Colonic mucosa (tissue), 4 donors: ENCODE measurements at regions of chr10 and their contacts with region 1.

Region 1: DNA sequence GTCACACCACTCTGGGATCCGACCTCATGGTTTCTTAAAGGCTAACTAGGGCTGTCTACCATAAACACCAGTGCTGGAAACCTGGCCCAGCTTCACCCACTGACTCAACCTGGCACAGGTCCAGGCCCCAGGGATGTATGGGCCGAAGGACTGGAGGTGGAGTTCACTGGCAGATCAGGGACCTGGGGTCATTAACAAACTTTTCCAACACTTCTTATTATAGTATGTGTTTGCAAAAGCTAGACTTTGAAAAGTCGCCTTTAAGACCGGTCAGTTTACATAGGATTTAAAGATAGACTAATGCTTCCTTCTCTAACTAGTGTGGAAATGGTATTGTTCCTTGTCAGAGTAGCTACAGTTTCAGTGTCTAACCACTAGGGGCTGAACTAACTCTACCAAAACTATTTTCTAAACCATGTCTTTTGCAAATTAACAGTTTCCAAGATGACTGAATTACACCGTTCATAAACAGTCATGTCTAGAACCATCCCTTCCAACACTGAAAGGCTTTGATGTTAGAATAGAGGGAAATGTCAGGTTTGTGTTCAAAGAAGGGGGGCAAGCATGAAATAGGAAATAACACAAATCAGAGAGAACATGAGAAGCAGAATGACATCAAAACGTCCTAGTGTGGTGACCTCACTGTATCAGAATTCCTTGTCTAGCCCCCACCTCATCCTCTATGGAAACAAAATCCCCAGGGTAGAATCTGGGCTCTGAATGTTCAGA is 29.7 kb downstream of the STN1 start:
- DNase-seq: peak; percentile 94
- H3K4me3 ChIP-seq: no peak overlapping the region
- H3K27ac ChIP-seq: peak overlapping the region; percentile 73
- H3K4me1 ChIP-seq: peaks cover 5% of the 10 kb centered on the region
- H3K27me3 ChIP-seq: no peaks in the 10 kb centered on the region
- CTCF ChIP-seq: peak; percentile 73

Region 2: DNA sequence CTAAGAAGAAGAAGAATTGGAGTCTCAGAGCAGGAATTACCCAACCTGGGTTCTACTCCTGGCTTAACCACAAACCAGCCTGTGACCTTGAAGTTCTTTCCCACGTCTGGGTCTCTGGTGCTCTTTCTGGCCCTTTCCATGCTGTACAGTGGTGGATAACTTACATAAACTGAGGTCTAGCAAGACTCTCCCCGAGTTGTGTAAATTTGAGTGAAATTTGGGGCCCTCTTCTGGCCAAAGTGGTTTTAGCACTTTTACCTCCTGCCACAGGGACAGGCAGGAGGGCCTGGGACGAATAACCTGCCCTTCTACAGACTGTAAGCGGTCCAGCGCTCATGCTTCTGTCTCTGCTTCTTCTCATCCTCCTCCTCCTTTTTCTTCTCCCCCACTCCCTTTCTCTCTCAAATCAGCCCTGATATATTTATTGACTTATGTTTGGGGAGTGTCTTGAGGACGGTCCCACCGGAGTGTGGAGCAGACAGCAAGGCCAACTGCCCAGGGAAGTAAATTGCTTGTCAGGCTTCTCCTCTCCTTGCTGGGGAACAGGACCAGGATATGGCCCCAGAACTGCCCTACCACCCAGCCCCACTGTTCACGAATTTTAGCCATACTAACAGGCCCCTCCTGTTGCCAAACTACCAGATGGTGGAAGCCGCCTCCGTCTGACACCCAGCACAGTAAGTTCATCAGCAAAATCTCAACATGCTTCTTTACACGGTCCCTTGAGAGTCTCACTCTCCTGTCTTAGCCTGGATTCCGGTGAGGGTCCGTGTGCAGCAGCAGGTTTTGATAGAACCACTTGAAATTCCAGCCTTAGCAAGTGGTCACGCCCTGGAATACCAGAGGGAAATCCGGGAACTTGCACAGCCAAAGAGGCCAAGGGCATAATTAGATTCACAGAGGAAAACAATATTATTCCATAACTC is 28.9 kb before region 1 on chr10:
- intact Hi-C with region 1: no loop called
- DNase-seq: peak; percentile 84
- H3K4me3 ChIP-seq: no peak overlapping the region
- H3K27ac ChIP-seq: no peak overlapping the region
- H3K4me1 ChIP-seq: no peaks in the 10 kb centered on the region
- H3K27me3 ChIP-seq: no peaks in the 10 kb centered on the region
- CTCF ChIP-seq: peak; percentile 60

Region 3: DNA sequence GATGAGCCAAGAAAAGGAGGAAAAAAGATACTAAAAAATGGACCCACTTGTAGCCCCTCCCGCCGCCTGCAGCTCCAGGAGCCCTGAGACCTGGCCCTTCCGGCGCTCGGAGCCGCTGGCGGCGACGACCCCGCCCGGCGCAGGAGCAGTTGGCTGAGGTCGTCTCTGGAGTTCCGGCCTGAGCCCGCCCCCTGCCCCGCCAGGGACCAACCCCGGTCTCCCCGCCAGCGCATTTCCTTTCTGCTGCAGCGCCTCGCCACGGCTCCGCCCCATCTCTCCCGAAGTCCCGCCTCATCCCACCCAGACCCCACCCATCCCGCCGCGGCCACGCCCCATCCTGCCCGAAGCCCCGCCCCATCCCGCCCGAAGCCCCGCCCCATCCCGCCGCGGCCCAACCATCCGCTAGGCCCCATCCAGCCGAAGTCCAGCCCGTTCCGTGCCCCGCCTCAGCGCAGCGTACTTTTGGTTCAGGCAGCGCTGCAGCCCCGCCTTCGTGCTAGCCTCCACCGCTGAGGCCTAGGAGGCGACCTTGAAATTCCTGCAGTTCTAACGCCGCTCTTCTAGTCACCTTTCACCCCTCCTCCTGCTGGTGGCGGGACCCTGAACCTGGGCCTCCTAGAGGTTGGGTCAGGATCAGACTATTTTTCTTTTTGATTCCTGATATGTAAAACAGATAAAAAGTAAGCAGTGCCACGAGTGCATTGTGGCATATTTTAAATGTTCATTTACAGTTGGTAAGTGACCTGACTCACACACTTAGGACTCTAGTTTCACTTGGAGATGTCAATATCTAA is 30.0 kb after region 1 on chr10 and contains the start of gene STN1:
- intact Hi-C with region 1: no loop called
- DNase-seq: peak; percentile 97
- H3K4me3 ChIP-seq: peak within 1 kb of the TSS; percentile 64
- H3K27ac ChIP-seq: peak within 1 kb of the TSS; percentile 98
- H3K4me1 ChIP-seq: peaks cover 5% of the 10 kb centered on the region
- H3K27me3 ChIP-seq: no peaks in the 10 kb centered on the region
- CTCF ChIP-seq: no peak
- total RNA-seq, gene STN1: 16.6 to 18.3 TPM

Region 4: DNA sequence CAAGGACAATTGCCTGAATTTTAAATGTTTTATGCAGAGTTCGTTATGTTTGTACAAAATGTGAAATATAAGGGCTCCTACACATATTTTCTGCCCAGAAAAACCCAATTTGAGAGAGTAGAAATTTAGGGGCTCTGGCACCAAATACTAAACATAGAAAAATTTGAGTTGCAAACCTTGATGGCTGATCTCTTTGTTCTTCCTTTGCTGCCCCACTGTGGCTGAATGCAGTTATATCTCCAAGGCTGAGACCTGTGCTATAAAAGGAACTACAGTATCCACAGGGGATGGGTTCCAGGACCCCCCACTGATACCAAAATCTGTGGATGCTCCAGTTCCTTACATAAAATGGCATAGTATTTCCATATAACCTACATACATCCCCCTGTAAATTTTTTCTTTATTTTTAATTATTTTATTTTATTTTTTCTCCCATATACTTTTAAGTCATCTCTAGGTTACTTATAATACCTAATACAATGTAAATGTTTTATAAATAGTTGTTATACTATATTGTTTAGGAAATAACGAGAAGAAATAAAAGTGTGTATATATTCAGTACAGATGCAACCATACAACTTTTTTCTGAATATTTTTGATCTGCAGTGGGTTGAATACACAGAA is 321.4 kb after region 1 on chr10:
- intact Hi-C with region 1: loop called (anchors 10 kb)
- DNase-seq: peak; percentile 34
- H3K4me3 ChIP-seq: no peak overlapping the region
- H3K27ac ChIP-seq: no peak overlapping the region
- H3K4me1 ChIP-seq: no peaks in the 10 kb centered on the region
- H3K27me3 ChIP-seq: no peaks in the 10 kb centered on the region
- CTCF ChIP-seq: peak; percentile 37